AG04450 (cell line): ENCODE measurements at regions of chr22 and their contacts with region 1.

Region 1: DNA sequence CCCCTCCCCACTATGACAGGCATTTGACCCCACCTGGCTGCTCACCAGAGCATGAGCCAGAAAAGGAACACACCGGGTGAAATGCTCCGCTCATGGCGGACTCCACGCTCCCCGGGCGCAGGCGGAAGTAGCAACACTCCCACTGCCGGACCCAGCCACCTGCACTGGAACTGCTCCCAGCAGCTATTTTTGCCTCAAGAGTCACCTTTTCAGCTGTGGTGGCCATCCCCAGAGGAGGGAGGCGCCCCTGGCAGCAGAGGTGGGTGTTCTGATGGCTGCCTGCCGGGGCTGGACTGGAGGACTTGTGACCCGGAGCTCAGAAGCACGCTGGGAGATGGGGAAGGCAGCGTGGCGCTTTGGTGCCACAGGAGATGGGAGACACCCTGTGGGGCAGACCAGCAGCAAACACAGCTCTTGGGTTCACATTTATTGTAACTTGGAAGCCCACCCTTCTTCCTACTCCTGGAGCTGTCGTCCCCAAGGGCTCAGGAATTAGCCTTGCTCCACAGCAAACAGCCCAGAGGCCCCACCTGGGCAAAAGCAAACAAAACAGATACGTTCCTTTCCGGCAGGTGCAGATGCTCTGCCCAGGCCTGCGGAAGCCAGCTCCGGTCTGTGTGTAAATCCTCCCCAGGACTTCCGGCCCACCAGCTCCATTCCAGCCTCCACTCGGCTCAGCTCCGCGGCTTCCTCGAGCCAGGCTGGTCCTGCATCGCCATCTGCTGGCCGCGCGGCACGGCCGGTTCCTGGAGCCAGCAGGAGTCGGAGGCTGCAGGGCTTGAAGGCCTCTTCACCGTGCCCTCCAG is 3.7 kb downstream of the RPS19BP1 start:
- DNase-seq: peak; percentile 84
- H3K4me3 ChIP-seq: peak overlapping the region; percentile 29; the same call in 1 of the 2 replicates
- H3K27ac ChIP-seq: no peak overlapping the region
- H3K27me3 ChIP-seq: no peaks in the 10 kb centered on the region
- CTCF ChIP-seq: peak; percentile 99

Region 2: DNA sequence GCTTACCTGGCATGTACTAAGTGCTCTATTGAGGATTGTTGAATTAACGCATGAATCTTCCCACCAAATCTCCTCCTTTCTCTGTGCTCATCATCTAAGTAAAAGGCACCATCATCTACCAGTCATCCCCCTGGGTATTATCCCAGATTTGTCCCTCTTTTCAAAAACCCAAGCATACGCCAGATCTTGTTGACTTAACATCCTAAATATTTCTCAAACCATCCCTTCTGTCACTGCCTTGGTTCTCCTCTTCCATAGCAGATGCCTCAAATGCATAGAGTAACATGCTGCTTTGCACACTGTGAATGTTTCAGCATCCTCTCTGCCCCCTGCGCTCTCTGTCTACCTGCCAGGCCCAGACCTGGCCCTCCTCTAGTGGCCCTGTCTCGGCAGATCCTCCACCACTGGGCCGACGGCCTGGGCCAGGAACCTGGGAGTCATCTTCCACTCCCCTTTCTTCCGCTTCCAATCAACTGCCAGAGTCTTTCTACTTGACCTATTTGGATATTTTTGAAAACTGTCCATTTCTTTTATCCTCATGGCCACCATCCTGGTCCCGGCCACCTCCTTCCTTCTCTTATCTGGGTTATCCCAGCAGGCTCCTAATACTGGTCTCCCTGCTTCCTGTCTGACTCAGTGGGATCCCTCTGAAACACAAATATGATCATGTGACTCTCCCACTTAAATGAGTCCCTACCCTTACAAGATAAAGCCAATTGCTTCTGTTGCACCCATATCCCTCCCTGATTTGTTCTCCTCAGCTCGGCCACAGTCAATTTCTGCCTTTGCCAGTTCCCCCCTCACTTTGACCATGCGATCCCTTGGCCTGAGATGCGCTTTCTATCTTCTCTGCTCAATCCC is 132.7 kb before region 1 on chr22:
- CTCF ChIA-PET with region 1: interaction called, 11 read pairs
- POLR2A ChIA-PET with region 1: interaction called, 6 read pairs
- DNase-seq: no peak
- H3K4me3 ChIP-seq: no peak overlapping the region
- H3K27ac ChIP-seq: no peak overlapping the region
- H3K27me3 ChIP-seq: no peaks in the 10 kb centered on the region
- CTCF ChIP-seq: no peak

Region 3: DNA sequence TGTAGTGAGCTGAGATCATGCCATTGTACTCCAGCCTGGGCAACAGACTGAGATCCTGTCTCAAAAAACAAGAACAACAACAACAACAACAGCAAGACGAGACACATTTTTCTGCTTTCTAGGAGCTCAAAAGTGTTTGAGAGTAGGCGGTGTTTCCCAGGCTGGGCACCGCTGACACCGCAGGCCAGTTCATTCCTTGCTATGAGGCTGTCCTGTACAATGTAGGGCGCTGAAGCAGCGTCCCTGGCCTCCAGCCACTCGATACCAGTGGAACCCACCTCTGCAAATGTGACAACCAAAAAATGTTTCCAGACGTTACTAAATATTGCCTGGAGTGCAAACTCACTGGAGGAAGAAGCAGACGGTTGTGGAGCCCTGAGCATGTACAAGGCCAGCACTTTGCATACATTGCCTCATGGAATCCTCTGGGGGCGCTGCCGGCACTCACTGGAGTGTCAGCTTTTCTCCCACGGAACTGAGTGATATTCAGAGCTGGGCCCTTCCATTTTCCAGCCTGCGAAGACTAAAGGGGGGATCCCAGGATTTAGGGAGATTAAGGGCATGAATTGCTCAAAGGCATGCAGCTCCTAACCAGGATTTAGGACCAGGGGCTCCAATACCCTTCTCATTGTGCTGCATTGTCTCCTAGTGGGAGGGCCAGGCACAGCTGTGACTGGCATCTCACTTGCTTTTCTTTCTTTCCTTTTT is 32.6 kb before region 1 on chr22:
- CTCF ChIA-PET with region 1: interaction called, 41 read pairs
- POLR2A ChIA-PET with region 1: interaction called, 29 read pairs
- DNase-seq: no peak
- H3K4me3 ChIP-seq: no peak overlapping the region
- H3K27ac ChIP-seq: no peak overlapping the region
- H3K27me3 ChIP-seq: no peaks in the 10 kb centered on the region
- CTCF ChIP-seq: peak; percentile 85

Region 4: DNA sequence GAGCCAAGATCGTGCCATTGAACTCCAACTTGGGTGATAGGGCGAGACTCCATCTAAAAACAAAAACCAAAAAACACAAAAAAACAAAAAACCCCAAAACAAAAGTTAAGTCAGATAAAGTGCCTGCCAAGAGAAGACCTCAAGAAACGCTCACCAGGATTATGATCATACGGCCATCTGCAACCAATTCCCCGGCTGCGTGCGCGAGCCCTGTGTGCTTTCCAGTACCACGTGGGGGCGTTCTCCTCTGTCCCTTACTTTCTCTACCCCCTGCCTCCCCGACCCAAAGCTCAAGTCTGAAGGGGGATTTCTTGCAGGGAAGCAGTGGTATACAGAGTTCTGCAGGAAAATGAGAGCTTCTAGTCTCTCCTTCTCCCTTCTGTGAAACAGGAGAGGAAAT is 14.2 kb after region 1 on chr22:
- CTCF ChIA-PET with region 1: no interaction called
- POLR2A ChIA-PET with region 1: no interaction called
- DNase-seq: no peak
- H3K4me3 ChIP-seq: no peak overlapping the region
- H3K27ac ChIP-seq: no peak overlapping the region
- H3K27me3 ChIP-seq: peaks cover 10% of the 10 kb centered on the region
- CTCF ChIP-seq: peak; percentile 51

Region 5: GRCh38 chr22:40036591-40037225 is 507.8 kb after region 1 on chr22:
- CTCF ChIA-PET with region 1: interaction called, 57 read pairs
- POLR2A ChIA-PET with region 1: interaction called, 3 read pairs
- DNase-seq: peak; percentile 58
- H3K4me3 ChIP-seq: no peak overlapping the region
- H3K27ac ChIP-seq: no peak overlapping the region
- H3K27me3 ChIP-seq: peaks cover 69% of the 10 kb centered on the region
- CTCF ChIP-seq: peak; percentile 88

Region 6: DNA sequence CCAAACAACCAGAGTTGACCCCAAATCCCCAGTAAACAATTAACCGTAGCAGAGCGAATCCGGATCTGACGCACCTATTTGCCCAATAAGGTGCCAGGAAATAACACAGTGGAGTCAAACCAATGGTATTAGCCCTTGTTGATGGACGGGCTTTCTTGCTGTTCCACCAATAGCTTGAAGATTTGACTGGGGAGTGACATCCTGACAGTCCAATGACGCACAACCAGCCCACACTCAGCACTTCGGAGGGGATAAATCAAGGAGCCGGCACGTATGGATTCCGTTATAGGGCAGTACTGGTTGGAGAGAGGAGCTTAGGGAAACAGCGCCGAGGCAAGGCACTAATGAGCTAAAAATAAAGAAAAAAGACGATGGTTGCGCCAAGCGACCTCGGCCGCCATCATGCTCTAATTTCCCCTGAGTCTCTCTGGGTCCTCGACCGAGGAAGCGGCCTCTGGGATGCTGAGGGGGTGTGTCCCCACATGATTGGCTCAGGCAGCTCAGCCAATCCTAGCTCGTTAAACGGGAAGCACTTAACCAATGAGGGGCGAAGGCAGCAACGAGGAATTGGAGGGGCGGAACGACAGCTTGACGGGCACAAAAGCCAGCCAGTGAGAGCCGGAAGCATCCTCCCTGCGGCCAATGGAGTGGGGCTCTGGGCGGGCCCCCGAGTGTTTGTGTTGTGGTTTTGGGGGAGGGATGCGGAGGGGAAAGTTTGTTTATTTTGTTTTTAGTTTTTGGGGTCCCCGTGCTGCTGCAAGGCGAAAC is 515.4 kb after region 1 on chr22:
- CTCF ChIA-PET with region 1: interaction called, 57 read pairs
- POLR2A ChIA-PET with region 1: interaction called, 4 read pairs
- DNase-seq: peak; percentile 99
- H3K4me3 ChIP-seq: peak overlapping the region; percentile 96
- H3K27ac ChIP-seq: peak overlapping the region; percentile 78
- H3K27me3 ChIP-seq: peaks cover 23% of the 10 kb centered on the region
- CTCF ChIP-seq: no peak